HEK293 (cell line): ENCODE measurements at regions of chr21 and their contacts with region 1.

Region 1: DNA sequence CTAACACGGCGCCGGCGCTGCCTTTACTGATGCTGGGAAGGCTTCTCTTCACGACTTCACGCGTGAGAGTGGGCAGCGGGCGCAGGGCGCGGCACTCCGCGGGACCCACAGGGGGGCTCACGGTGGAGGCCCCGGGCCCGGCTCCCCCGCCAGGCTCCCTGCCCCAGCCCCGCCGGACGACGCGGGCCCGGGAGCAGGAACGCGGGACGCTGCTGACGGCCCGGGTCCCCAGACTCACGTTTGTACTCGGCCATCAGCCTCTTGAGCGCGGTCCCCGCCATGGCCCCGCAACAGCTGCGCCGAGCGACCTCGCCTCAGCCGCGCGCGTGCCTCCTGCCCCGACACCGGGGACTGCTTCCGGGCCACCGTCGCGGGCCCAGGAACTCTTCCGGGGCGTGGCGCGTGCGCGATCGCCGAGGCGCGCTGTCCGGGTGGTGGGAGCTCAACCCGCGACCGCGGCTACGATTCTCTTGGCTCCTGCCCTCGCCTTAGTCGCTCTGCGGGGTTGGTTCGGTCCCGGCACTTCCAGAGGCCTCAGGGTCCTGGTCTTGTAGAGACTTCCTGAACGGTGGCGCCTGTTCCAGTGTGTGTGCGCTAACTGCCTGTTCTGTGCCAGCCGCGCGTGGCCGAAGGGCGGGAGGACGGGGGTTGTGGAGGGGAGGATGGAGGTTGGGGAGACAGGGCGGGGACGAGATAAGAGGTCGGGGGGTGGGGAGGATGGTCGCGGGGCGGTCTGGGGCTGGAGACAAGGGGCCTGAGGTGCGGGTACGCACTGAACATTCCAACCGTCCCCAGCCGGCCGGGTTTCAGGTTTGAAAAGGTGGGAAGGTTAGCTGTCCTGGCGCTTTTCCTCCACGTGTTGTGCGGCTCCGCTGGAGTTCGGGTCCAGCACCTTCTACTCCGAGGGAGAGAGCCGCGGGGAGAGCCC is at the start of gene UBE2G2:
- H3K4me3 ChIP-seq: peak within 1 kb of the TSS; percentile 82
- H3K27ac ChIP-seq: peak within 1 kb of the TSS; percentile 69; the same call in 1 of the 2 replicates
- H3K4me1 ChIP-seq: peaks cover 4% of the 10 kb centered on the region; the same call in 1 of the 2 replicates
- CTCF ChIP-seq: no peak; the same call in 1 of the 2 replicates

Region 2: DNA sequence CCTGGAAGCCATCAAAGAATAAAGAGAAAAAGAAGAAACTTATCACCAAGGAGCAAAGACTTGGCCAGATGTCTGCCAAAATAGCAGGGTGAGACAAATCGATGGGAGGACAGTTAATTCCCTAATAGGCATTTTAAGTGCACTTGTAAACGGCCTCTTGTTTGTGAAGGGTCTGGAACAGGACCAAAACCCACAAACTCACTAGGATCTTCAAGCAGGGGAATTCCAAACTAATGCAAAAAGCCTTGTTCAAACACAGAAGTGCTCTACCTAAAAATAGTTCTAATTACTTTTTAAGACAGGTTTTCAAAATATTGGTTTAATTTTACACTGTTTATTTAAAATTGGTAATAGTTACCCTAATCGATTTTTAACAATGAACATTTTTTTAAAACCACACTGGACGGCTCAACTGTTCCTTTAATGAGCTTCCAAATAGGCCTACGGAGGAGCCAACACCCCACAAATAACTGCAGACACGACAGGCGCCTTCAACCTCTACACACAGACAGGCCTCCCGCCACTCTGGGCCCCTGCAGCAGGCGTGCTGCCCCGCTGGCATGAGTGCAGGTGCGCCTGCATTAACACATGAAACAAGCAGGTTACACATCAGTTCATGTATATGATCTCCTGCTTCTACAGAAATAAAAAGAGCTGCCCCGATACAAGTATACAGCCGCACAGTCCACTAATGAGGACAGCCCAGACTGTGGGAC is 16.0 kb before region 1 on chr21:
- CTCF ChIA-PET with region 1: interaction called, 12 read pairs
- POLR2A ChIA-PET with region 1: interaction called, 4 read pairs
- H3K4me3 ChIP-seq: no peak overlapping the region
- H3K27ac ChIP-seq: peak overlapping the region; percentile 17
- H3K4me1 ChIP-seq: peaks cover 15% of the 10 kb centered on the region
- CTCF ChIP-seq: no peak

Region 3: DNA sequence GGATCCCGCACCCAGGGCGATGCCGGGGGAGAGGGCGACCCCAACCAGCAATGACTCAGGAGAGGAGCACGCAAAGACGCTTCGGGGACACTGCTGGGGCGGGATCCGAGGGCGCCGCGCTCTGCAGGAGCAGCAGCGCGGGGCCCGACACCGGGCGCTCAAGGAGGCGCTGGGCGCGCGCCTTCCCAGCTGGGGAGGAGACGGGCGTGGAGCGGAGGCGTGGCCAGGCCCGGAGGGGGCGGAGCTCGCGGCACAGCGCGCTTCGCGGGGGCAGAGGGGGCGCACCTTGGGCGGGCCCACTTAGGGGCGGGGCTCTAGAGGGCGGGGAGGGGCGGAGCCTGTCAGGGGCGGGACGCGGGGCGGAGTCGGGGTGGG is 15.8 kb after region 1 on chr21:
- CTCF ChIA-PET with region 1: interaction called, 3 read pairs
- POLR2A ChIA-PET with region 1: interaction called, 15 read pairs
- H3K4me3 ChIP-seq: peak overlapping the region; percentile 55
- H3K27ac ChIP-seq: peak overlapping the region; percentile 76; the same call in 1 of the 2 replicates
- H3K4me1 ChIP-seq: no peaks in the 10 kb centered on the region
- CTCF ChIP-seq: no peak

Region 4: GRCh38 chr21:44854664-44855446 is 53.1 kb after region 1 on chr21:
- CTCF ChIA-PET with region 1: interaction called, 3 read pairs
- POLR2A ChIA-PET with region 1: interaction called, 10 read pairs
- H3K4me3 ChIP-seq: no peak overlapping the region
- H3K27ac ChIP-seq: no peak overlapping the region
- H3K4me1 ChIP-seq: no peaks in the 10 kb centered on the region
- CTCF ChIP-seq: no peak

Region 5: DNA sequence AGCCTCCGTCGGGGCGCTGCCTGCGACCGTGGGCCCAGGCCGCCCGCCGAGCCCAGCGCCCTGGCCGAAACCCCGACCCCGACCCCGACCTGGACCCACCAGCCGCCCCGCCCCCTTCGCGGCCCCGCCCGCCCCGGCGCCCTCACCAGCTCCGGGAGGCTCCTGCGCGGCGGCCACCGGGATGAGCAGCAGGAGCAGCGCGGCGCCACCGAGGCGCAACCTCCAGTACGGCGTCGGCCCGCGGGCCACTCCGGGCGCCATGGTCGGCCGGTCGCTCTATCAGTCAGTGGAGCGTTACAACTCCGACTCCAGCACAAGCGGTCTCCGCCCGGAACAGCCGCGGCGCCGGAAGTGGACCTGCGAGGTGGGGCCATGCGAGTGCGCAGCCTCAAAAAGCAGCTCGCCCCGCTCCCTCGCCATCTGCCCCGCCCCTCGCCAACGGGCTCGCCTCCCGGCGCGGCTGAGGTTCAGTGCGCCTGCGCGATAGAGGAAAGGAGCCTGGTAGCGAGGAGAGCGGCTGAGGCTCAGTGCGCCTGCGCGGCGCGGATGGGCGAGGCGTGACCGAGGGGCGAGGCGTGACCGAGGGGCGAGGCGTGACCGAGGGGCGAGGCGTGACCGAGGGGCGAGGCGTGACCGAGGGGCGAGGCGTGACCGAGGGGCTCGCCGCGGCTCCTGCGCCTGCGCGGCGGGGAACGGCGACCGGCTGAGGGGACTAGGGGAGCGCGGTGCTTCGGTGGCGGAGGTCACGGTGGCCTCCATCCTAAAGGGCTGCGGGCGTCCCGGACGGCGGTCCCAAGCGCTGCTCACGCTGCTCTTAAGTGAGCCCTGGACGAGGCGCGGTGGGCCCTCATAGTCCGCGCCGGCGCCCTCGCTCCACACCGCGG is 71.9 kb after region 1 on chr21 and contains the start of gene PTTG1IP:
- CTCF ChIA-PET with region 1: no interaction called
- POLR2A ChIA-PET with region 1: interaction called, 22 read pairs
- H3K4me3 ChIP-seq: peak within 1 kb of the TSS; percentile 79
- H3K27ac ChIP-seq: peak within 1 kb of the TSS; percentile 65
- H3K4me1 ChIP-seq: peaks cover 28% of the 10 kb centered on the region
- CTCF ChIP-seq: no peak

Region 6: GRCh38 chr21:44927587-44928461 is 126.1 kb after region 1 on chr21:
- CTCF ChIA-PET with region 1: interaction called, 21 read pairs
- POLR2A ChIA-PET with region 1: interaction called, 8 read pairs
- H3K4me3 ChIP-seq: no peak overlapping the region
- H3K27ac ChIP-seq: no peak overlapping the region
- H3K4me1 ChIP-seq: 0 out of 2 replicates have a peak, but pooled peaks cover 5% of the 10 kb centered on the region
- CTCF ChIP-seq: no peak

Region 7: GRCh38 chr21:45016406-45017038 is 214.8 kb after region 1 on chr21:
- CTCF ChIA-PET with region 1: no interaction called
- POLR2A ChIA-PET with region 1: no interaction called
- H3K4me3 ChIP-seq: no peak overlapping the region
- H3K27ac ChIP-seq: no peak overlapping the region
- H3K4me1 ChIP-seq: 0 out of 2 replicates have a peak, but pooled peaks cover 2% of the 10 kb centered on the region
- CTCF ChIP-seq: no peak

Region 8: GRCh38 chr21:45363921-45364467 is 562.3 kb after region 1 on chr21:
- CTCF ChIA-PET with region 1: no interaction called
- POLR2A ChIA-PET with region 1: no interaction called
- H3K4me3 ChIP-seq: no peak overlapping the region
- H3K27ac ChIP-seq: no peak overlapping the region
- H3K4me1 ChIP-seq: no peaks in the 10 kb centered on the region
- CTCF ChIP-seq: no peak